ENCODE measurements at regions of chrX and their contacts with region 1.

Region 1: DNA sequence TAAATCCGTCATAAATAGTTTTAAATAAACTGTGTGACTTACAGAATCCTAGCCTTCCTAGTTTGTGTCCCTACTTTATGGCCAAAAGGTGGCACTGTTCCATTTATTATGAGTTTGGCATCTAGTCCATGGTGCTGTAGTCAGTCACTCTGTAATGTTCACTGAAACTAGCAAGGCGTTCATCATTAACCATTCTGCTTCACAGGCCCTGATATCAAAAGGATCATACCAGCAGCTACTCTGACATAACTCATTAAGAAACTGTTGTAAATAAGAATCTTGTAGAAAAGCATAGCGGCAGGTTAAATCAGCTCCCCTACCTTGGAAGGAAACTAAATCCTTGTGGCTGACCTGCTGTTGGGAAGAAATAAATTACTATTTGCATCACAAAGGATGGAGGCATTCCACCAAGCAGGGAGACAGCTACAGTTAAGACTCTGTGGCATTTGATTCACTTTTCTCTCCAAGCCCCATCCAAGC is 919.6 kb upstream of the DIAPH2 start:
- DNase-seq: peak; percentile 1
- H3K4me3 Mint-ChIP-seq: no peak overlapping the region
- H3K27ac Mint-ChIP-seq: no peak overlapping the region
- H3K4me1 Mint-ChIP-seq: no peaks in the 10 kb centered on the region
- H3K27me3 Mint-ChIP-seq: no peaks in the 10 kb centered on the region
- CTCF ChIP-seq: no peak

Region 2: DNA sequence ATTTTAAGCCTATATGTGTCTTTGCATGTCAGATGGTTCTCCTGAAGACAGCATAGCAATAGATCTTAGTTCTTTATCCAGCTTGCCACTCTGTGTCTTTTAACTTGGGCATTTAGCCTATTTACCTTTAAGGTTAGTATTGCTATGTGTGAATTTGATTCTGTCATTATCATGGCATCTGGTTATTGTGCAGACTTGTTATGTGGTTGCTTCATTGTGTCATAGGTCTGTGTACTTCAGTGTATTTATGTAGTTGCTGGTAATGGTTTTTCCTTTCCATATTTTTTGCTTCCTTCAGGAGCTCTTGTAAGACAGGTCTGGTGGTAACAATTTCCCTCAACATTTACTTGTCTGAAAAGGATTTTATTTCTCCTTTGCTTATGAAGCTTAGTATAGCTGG is 647.5 kb before region 1 on chrX:
- CTCF ChIA-PET with region 1: no interaction called
- intact Hi-C with region 1: no loop called
- DNase-seq: no peak
- H3K4me3 Mint-ChIP-seq: no peak overlapping the region
- H3K27ac Mint-ChIP-seq: no peak overlapping the region
- H3K4me1 Mint-ChIP-seq: no peaks in the 10 kb centered on the region
- H3K27me3 Mint-ChIP-seq: no peaks in the 10 kb centered on the region
- CTCF ChIP-seq: no peak

Region 3: GRCh38 chrX:95441836-95442235 is 323.2 kb before region 1 on chrX:
- CTCF ChIA-PET with region 1: no interaction called
- intact Hi-C with region 1: no loop called
- DNase-seq: no peak
- H3K4me3 Mint-ChIP-seq: no peak overlapping the region
- H3K27ac Mint-ChIP-seq: no peak overlapping the region
- H3K4me1 Mint-ChIP-seq: no peaks in the 10 kb centered on the region
- H3K27me3 Mint-ChIP-seq: no peaks in the 10 kb centered on the region
- CTCF ChIP-seq: no peak

Region 4: GRCh38 chrX:95903490-95903889 is 138.5 kb after region 1 on chrX:
- CTCF ChIA-PET with region 1: no interaction called
- intact Hi-C with region 1: loop called (anchors 10 kb)
- DNase-seq: no peak
- H3K4me3 Mint-ChIP-seq: no peak overlapping the region
- H3K27ac Mint-ChIP-seq: no peak overlapping the region
- H3K4me1 Mint-ChIP-seq: no peaks in the 10 kb centered on the region
- H3K27me3 Mint-ChIP-seq: no peaks in the 10 kb centered on the region
- CTCF ChIP-seq: no peak

Region 5: GRCh38 chrX:96004386-96004785 is 239.4 kb after region 1 on chrX:
- CTCF ChIA-PET with region 1: no interaction called
- intact Hi-C with region 1: no loop called
- DNase-seq: no peak
- H3K4me3 Mint-ChIP-seq: no peak overlapping the region
- H3K27ac Mint-ChIP-seq: no peak overlapping the region
- H3K4me1 Mint-ChIP-seq: no peaks in the 10 kb centered on the region
- H3K27me3 Mint-ChIP-seq: no peaks in the 10 kb centered on the region
- CTCF ChIP-seq: no peak

Region 6: GRCh38 chrX:96181605-96182004 is 416.6 kb after region 1 on chrX:
- CTCF ChIA-PET with region 1: interaction called, 4 read pairs
- intact Hi-C with region 1: loop called (anchors 1 kb)
- DNase-seq: no peak
- H3K4me3 Mint-ChIP-seq: no peak overlapping the region
- H3K27ac Mint-ChIP-seq: no peak overlapping the region
- H3K4me1 Mint-ChIP-seq: no peaks in the 10 kb centered on the region
- H3K27me3 Mint-ChIP-seq: peaks cover 8% of the 10 kb centered on the region
- CTCF ChIP-seq: no peak

Region 7: DNA sequence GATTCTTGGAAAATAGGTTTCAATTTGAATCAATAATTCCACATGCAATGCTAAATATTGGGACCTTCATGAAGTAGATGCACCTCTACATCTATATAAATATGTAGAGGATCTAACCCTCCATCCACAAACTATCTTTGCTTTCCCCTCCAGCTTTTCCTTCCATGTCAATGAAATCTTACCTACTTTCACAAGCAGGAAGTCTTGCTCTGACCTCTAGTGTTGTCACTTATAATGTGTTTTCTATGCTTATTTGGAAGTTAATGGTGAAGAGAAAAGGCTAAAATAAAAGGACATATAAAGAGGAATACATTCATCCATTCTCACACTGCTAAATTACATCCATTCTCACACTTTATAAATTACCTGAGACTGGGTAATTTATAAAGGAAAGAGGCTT is 446.9 kb after region 1 on chrX:
- CTCF ChIA-PET with region 1: no interaction called
- intact Hi-C with region 1: no loop called
- DNase-seq: no peak
- H3K4me3 Mint-ChIP-seq: no peak overlapping the region
- H3K27ac Mint-ChIP-seq: no peak overlapping the region
- H3K4me1 Mint-ChIP-seq: no peaks in the 10 kb centered on the region
- H3K27me3 Mint-ChIP-seq: no peaks in the 10 kb centered on the region
- CTCF ChIP-seq: no peak

Measured in Calu3 (cell line).